ENCODE measurements at regions of chr16 and their contacts with region 1.

Region 1: GRCh38 chr16:30355144-30355894 is at the start of gene CD2BP2:
- DNase-seq: peak; percentile 84 to 87 (median 86)
- H3K4me3 ChIP-seq: peak within 1 kb of the TSS; percentile 94 to 98
- H3K4me3 Mint-ChIP-seq: peak within 1 kb of the TSS; percentile 90 to 98 (median 96)
- H3K27ac ChIP-seq: peak within 1 kb of the TSS; percentile 95
- H3K27ac Mint-ChIP-seq: peak within 1 kb of the TSS; percentile 96 to 99 (median 98)
- H3K4me1 ChIP-seq: peaks cover 32% of the 10 kb centered on the region
- H3K4me1 Mint-ChIP-seq: peaks cover 13 to 46% (median 26%) of the 10 kb centered on the region in 4 donors
- H3K27me3 ChIP-seq: no peaks in the 10 kb centered on the region
- H3K27me3 Mint-ChIP-seq: no peaks in the 10 kb centered on the region
- total RNA-seq, gene CD2BP2: 72.9 to 79.4 TPM

Region 2: GRCh38 chr16:30166202-30166902 is 189.0 kb before region 1 on chr16:
- CTCF ChIA-PET with region 1: no interaction called
- POLR2A ChIA-PET with region 1: no interaction called
- intact Hi-C with region 1: no loop called
- DNase-seq: peak in 1 of 5 donors; percentile 20
- H3K4me3 ChIP-seq: no peak overlapping the region
- H3K4me3 Mint-ChIP-seq: peak overlapping the region in 7 of 8 donors; percentile 25 to 85 (median 49)
- H3K27ac ChIP-seq: no peak overlapping the region
- H3K27ac Mint-ChIP-seq: peak overlapping the region in 4 of 7 donors; percentile 60 to 87 (median 76)
- H3K4me1 ChIP-seq: peaks cover 11% of the 10 kb centered on the region
- H3K4me1 Mint-ChIP-seq: peaks cover 20 to 39% (median 29%) of the 10 kb centered on the region in 4 donors
- H3K27me3 ChIP-seq: no peaks in the 10 kb centered on the region
- H3K27me3 Mint-ChIP-seq: no peaks in the 10 kb centered on the region

Region 3: DNA sequence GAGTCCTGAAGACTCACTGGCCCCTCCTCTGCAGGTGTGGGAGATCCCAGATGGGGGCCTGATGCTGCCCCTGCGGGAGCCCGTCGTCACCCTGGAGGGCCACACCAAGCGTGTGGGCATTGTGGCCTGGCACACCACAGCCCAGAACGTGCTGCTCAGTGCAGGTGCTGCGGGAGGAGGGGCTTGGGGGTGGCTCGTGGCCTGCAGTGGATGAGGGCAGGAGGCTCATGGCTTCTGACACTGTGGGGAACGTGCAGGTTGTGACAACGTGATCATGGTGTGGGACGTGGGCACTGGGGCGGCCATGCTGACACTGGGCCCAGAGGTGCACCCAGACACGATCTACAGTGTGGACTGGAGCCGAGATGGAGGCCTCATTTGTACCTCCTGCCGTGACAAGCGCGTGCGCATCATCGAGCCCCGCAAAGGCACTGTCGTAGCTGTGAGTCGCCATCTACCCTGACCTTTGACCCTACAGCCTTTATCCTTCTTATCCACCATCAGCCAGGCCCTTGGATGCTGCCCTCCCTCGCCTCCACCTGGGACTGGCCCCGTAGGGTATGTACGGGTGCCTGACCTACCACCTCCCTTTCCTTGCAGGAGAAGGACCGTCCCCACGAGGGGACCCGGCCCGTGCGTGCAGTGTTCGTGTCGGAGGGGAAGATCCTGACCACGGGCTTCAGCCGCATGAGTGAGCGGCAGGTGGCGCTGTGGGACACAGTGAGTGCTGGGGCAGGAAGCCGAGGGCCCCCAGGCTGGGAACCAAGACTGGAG is 168.3 kb before region 1 on chr16:
- CTCF ChIA-PET with region 1: no interaction called
- POLR2A ChIA-PET with region 1: no interaction called
- intact Hi-C with region 1: no loop called
- DNase-seq: peak; percentile 77 to 88 (median 84)
- H3K4me3 ChIP-seq: peak overlapping the region; percentile 91
- H3K4me3 Mint-ChIP-seq: peak overlapping the region; percentile 94 to 99 (median 98)
- H3K27ac ChIP-seq: peak overlapping the region; percentile 77
- H3K27ac Mint-ChIP-seq: peak overlapping the region; percentile 94 to 99 (median 96)
- H3K4me1 ChIP-seq: peaks cover 38% of the 10 kb centered on the region
- H3K4me1 Mint-ChIP-seq: peaks cover 14 to 49% (median 23%) of the 10 kb centered on the region in 4 donors
- H3K27me3 ChIP-seq: no peaks in the 10 kb centered on the region
- H3K27me3 Mint-ChIP-seq: no peaks in the 10 kb centered on the region

Region 4: GRCh38 chr16:30335598-30336474 is 19.5 kb before region 1 on chr16:
- CTCF ChIA-PET with region 1: no interaction called
- POLR2A ChIA-PET with region 1: interaction called, 27 read pairs
- intact Hi-C with region 1: loop called (anchors 2 kb)
- DNase-seq: peak in 1 of 5 donors; percentile 62
- H3K4me3 ChIP-seq: peak overlapping the region in 1 of 2 donors; percentile 47
- H3K4me3 Mint-ChIP-seq: peak overlapping the region; percentile 81 to 92 (median 86)
- H3K27ac ChIP-seq: peak overlapping the region; percentile 67
- H3K27ac Mint-ChIP-seq: peak overlapping the region; percentile 85 to 96 (median 90)
- H3K4me1 ChIP-seq: peaks cover 9% of the 10 kb centered on the region
- H3K4me1 Mint-ChIP-seq: peaks cover 8 to 31% (median 18%) of the 10 kb centered on the region in 4 donors
- H3K27me3 ChIP-seq: no peaks in the 10 kb centered on the region
- H3K27me3 Mint-ChIP-seq: no peaks in the 10 kb centered on the region

Region 5: DNA sequence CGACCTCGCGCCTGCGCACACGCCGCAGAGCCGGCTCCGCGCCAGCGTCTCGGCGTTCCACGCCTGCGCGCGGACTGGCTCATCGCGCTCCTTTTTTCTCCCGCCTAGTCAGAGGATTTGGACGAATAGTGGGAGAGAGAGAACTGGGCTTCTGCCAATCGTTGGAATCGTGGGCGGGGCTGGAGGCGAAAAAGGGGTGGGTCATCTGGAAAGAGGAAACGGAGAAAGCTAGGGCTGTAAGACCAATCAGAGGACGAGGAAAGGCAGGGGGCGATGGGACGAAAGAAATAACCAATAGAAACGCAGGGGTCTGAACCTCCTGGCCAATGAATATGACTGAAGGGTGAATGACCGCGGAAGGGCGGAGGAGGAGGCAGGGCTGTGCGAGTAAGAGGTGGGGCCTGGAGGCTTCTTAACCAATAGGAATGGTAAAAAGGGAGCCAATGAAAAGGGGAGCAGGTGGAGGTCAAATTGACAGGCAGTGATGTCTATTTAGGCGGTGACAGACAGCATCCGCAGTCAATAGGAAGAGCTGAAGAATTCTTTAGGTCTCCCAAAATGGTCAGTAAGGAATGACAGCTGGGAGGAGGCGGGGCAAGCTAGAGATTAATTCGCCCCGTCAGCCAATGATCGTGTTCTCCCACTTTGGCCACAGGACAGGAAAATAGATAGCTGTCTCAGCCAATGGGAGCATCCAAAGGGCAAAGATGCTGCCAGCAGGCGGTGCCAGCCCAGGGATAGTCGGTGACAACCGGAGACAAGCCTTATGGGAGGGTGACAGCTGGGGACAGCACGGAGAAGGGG is 15.3 kb after region 1 on chr16 and contains the start of gene TBC1D10B:
- CTCF ChIA-PET with region 1: interaction called, 7 read pairs
- POLR2A ChIA-PET with region 1: interaction called, 59 read pairs
- intact Hi-C with region 1: loop called (anchors 1 kb)
- DNase-seq: peak; percentile 99 to 100 (median 100)
- H3K4me3 ChIP-seq: peak within 1 kb of the TSS; percentile 67 to 88
- H3K4me3 Mint-ChIP-seq: peak within 1 kb of the TSS; percentile 87 to 94 (median 90)
- H3K27ac ChIP-seq: peak within 1 kb of the TSS; percentile 72
- H3K27ac Mint-ChIP-seq: peak within 1 kb of the TSS; percentile 83 to 99 (median 95)
- H3K4me1 ChIP-seq: peaks cover 46% of the 10 kb centered on the region
- H3K4me1 Mint-ChIP-seq: peaks cover 43 to 60% (median 49%) of the 10 kb centered on the region in 4 donors
- H3K27me3 ChIP-seq: no peaks in the 10 kb centered on the region
- H3K27me3 Mint-ChIP-seq: peaks cover 0 to 2% of the 10 kb centered on the region in 2 donors
- total RNA-seq, gene TBC1D10B: 47.0 to 55.3 TPM

Region 6: GRCh38 chr16:30378236-30379204 is 23.2 kb after region 1 on chr16:
- CTCF ChIA-PET with region 1: no interaction called
- POLR2A ChIA-PET with region 1: interaction called, 47 read pairs
- intact Hi-C with region 1: loop called (anchors 2 kb)
- DNase-seq: peak; percentile 98 to 99 (median 99)
- H3K4me3 ChIP-seq: peak overlapping the region; percentile 84 to 91
- H3K4me3 Mint-ChIP-seq: peak overlapping the region; percentile 91 to 100 (median 96)
- H3K27ac ChIP-seq: peak overlapping the region; percentile 96
- H3K27ac Mint-ChIP-seq: peak overlapping the region; percentile 97 to 100 (median 100)
- H3K4me1 ChIP-seq: peaks cover 69% of the 10 kb centered on the region
- H3K4me1 Mint-ChIP-seq: peaks cover 32 to 71% (median 48%) of the 10 kb centered on the region in 4 donors
- H3K27me3 ChIP-seq: no peaks in the 10 kb centered on the region
- H3K27me3 Mint-ChIP-seq: no peaks in the 10 kb centered on the region

Region 7: DNA sequence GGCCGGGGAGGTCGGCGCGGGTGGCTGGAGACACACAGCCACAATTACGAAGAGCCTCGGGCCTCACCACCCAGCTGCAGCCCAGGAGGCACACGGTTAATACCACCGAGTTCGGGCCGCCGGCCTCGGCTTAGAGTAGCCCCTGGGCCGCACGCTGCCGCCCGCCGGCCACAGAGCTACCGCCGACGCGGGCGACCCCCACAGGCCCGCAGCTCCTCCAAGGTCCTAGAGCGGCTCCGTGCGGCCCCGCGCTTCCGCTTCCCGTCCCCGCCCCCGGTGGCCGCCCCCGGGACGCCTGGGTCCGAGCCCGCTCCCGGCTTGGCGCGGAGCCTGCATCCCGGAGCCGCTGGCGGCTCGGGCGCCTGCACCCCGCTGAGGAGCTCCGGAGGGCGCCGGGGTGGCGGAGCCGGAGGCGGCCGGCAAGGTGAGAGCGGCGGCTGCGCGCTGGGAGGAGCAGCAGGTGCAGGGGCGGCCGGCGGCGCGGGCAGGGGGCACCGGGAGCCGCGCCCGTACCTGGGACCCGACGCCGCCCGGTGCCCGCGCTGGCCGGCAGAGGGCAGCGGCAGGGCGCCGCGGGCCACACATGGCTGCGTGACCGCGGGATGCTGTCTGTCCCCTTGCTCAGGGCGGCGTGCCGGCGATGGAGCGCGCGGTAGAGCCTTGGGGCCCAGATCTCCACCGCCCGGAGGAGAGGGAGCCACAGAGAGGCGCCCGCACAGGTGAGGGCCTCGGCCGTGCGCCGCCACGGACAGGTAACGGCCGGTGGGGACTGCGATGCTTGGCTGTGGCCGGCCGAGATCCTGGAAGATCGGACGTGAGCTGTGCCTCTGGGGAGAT is 40.1 kb after region 1 on chr16 and contains the start of gene ZNF48:
- CTCF ChIA-PET with region 1: no interaction called
- POLR2A ChIA-PET with region 1: interaction called, 11 read pairs
- intact Hi-C with region 1: loop called (anchors 1 kb)
- DNase-seq: peak in 4 of 5 donors; percentile 44 to 65 (median 53)
- H3K4me3 ChIP-seq: peak within 1 kb of the TSS; percentile 18 to 73
- H3K4me3 Mint-ChIP-seq: peak within 1 kb of the TSS; percentile 83 to 96 (median 89)
- H3K27ac ChIP-seq: peak within 1 kb of the TSS; percentile 56
- H3K27ac Mint-ChIP-seq: peak within 1 kb of the TSS; percentile 58 to 92 (median 84)
- H3K4me1 ChIP-seq: peaks cover 32% of the 10 kb centered on the region
- H3K4me1 Mint-ChIP-seq: peaks cover 15 to 39% (median 26%) of the 10 kb centered on the region in 4 donors
- H3K27me3 ChIP-seq: no peaks in the 10 kb centered on the region
- H3K27me3 Mint-ChIP-seq: no peaks in the 10 kb centered on the region
- total RNA-seq, gene ZNF48: 15.8 to 16.7 TPM

Region 8: GRCh38 chr16:30445408-30446202 is 90.3 kb after region 1 on chr16 and contains the start of gene SEPHS2:
- CTCF ChIA-PET with region 1: no interaction called
- POLR2A ChIA-PET with region 1: no interaction called
- intact Hi-C with region 1: no loop called
- DNase-seq: peak; percentile 93 to 98 (median 94)
- H3K4me3 ChIP-seq: peak within 1 kb of the TSS; percentile 92 to 94
- H3K4me3 Mint-ChIP-seq: peak within 1 kb of the TSS; percentile 89 to 98 (median 96)
- H3K27ac ChIP-seq: peak within 1 kb of the TSS; percentile 96
- H3K27ac Mint-ChIP-seq: peak within 1 kb of the TSS; percentile 87 to 98 (median 96)
- H3K4me1 ChIP-seq: peaks cover 42% of the 10 kb centered on the region
- H3K4me1 Mint-ChIP-seq: peaks cover 24 to 44% (median 36%) of the 10 kb centered on the region in 4 donors
- H3K27me3 ChIP-seq: no peaks in the 10 kb centered on the region
- H3K27me3 Mint-ChIP-seq: no peaks in the 10 kb centered on the region
- total RNA-seq, gene SEPHS2: 42.0 to 44.4 TPM

Region 9: GRCh38 chr16:31920373-31920772 is 1565.1 kb after region 1 on chr16:
- CTCF ChIA-PET with region 1: no interaction called
- POLR2A ChIA-PET with region 1: no interaction called
- intact Hi-C with region 1: no loop called
- DNase-seq: no peak
- H3K4me3 ChIP-seq: no peak overlapping the region
- H3K4me3 Mint-ChIP-seq: no peak overlapping the region
- H3K27ac ChIP-seq: no peak overlapping the region
- H3K27ac Mint-ChIP-seq: no peak overlapping the region
- H3K4me1 ChIP-seq: no peaks in the 10 kb centered on the region
- H3K4me1 Mint-ChIP-seq: no peaks in the 10 kb centered on the region
- H3K27me3 ChIP-seq: no peaks in the 10 kb centered on the region
- H3K27me3 Mint-ChIP-seq: no peaks in the 10 kb centered on the region

Measured in CD4-positive, alpha-beta memory T cell (primary cell).